ENCODE measurements at regions of chr9 and their contacts with region 1.

Region 1: GRCh38 chr9:120974921-120975320 is 48.3 kb upstream of the TRAF1 start:
- DNase-seq: no peak
- ATAC-seq: no peak
- H3K4me3 ChIP-seq: no peak overlapping the region
- H3K27ac ChIP-seq: no peak overlapping the region
- H3K4me1 ChIP-seq: no peaks in the 10 kb centered on the region
- H3K27me3 ChIP-seq: no peaks in the 10 kb centered on the region
- CTCF ChIP-seq: no peak
- POLR2A ChIP-seq: no peak

Region 2: DNA sequence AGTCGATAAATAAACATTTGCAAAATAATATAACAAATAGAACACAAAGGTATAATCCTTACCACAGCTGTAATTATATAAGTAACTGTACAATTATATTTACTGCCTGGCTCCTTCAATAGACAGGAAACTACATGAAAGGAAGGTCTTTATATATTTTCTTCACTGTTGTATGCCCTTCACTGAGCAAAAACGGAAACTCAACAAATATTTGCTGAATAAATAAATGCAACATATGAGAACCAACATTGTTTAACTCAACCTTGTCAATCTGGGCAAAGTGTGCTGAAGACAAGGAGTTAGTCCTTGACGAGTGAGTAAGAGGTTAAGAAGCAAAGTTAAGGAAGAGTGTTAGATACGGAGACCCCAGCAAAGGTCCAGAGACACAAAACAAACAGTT is 154.8 kb before region 1 on chr9:
- intact Hi-C with region 1: no loop called
- DNase-seq: no peak
- ATAC-seq: no peak
- H3K4me3 ChIP-seq: no peak overlapping the region
- H3K27ac ChIP-seq: no peak overlapping the region
- H3K4me1 ChIP-seq: no peaks in the 10 kb centered on the region
- H3K27me3 ChIP-seq: no peaks in the 10 kb centered on the region
- CTCF ChIP-seq: no peak
- POLR2A ChIP-seq: no peak

Region 3: GRCh38 chr9:120916588-120916987 is 58.3 kb before region 1 on chr9:
- intact Hi-C with region 1: loop called (anchors 10 kb)
- DNase-seq: peak; percentile 43 to 63 (median 58)
- ATAC-seq: peak; percentile 68
- H3K4me3 ChIP-seq: no peak overlapping the region
- H3K27ac ChIP-seq: no peak overlapping the region
- H3K4me1 ChIP-seq: no peaks in the 10 kb centered on the region
- H3K27me3 ChIP-seq: no peaks in the 10 kb centered on the region
- CTCF ChIP-seq: peak in 2 of 7 experiments; percentile 7 to 13
- POLR2A ChIP-seq: no peak

Region 4: DNA sequence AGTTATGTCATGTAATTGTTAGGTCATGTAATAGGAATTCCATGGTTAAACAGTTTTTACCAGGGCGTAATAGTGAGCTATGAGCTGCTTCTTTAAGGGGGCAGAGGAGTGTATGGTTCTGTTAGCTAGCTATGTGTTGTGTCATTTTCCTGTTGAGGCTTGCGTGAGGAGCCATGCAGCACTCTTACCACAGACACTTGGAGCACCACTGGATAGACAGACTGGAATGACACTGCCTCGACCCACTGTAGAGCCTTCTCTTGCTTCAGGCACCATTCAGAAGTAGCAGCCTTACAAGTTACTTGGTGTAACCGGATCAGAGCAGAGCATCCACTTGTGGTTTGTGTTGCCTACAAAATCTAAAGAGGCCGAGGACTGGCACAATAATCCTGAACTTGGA is 423.5 kb after region 1 on chr9:
- intact Hi-C with region 1: no loop called
- DNase-seq: no peak
- ATAC-seq: no peak
- H3K4me3 ChIP-seq: no peak overlapping the region
- H3K27ac ChIP-seq: no peak overlapping the region
- H3K4me1 ChIP-seq: no peaks in the 10 kb centered on the region
- H3K27me3 ChIP-seq: no peaks in the 10 kb centered on the region
- CTCF ChIP-seq: no peak
- POLR2A ChIP-seq: no peak